CD14-positive monocyte (primary cell): ENCODE measurements at regions of chr17 and their contacts with region 1.

Region 1: DNA sequence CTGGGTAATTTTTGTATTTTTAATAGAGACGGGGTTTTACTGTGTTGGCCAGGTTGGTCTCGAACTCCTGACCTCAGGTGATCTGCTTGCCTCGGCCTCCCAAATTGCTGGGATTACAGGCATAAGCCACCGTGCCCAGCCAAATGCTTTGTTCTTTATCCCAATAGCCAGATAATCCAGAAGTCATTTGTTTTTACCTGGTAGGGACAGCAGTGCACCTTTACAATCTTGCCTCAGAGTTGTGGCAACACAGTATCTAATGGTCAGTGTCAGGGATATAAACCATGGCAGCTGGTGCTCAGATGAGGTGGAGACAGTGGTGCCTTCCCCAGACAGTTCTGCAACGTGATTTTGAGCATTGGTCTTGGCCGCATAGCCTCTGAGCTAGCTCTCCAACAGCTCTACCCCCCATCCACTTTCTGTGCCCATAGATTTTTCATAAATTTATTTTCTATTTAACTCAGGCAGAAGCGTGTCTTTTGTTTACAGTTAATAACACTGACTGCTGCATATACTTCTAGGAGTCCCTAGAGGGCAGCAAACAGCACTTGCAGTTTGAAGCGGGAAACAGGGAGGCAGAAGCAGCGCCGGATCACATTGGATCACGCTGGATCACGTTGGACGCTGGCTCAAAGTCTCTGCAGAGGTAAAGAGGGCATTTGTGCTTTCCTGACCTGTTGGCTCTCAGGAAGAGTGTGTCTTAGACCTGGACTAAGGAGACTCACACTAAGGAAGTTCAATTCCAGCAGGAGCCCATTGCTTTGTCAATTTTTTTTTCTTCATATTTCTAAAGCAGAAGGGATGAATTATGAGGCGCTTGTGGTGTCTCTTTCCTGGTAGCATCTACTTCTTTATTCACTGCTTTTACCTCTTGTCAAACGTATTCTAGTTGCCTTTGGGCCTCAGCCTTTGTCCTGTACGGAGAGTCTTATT is 5.1 kb upstream of the GGT6 start:
- DNase-seq: peak; percentile 50 to 74 (median 72)
- H3K4me3 ChIP-seq: no peak overlapping the region
- H3K4me3 Mint-ChIP-seq: peak overlapping the region; percentile 13 to 57
- H3K27ac ChIP-seq: no peak overlapping the region
- H3K27ac Mint-ChIP-seq: no peak overlapping the region
- H3K4me1 ChIP-seq: peaks cover 2 to 4% of the 10 kb centered on the region in 2 donors
- H3K4me1 Mint-ChIP-seq: peaks cover 17% of the 10 kb centered on the region
- H3K27me3 ChIP-seq: no peaks in the 10 kb centered on the region
- H3K27me3 Mint-ChIP-seq: peaks cover 0 to 5% (median 4%) of the 10 kb centered on the region in 3 donors
- CTCF ChIP-seq: peak; percentile 90

Region 2: DNA sequence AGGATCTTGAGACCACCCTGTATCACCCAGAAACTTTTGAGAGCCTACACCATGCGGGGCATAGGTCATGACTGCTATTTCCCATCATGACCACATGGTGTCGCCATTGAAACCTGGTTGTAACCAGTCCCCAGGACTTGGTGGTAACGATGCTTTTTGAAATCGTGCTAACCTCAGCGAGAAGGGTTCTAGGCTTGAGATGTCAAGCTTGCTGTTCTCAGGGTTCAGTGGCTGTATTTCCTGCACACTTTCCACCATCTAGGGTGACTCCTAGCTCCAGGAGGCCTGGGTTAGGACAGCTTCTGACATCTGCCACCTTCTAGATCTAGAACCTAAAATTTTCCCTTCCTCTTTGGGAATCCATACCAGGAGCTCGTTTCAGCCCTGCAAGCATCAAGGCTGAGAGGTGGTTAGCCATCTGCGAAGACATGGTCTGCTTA is 144.8 kb before region 1 on chr17:
- intact Hi-C with region 1: loop called in 1 of 2 experiments (anchors 10 kb)
- DNase-seq: peak; percentile 59 to 76 (median 71)
- H3K4me3 ChIP-seq: no peak overlapping the region
- H3K4me3 Mint-ChIP-seq: peak overlapping the region in 1 of 2 donors; percentile 46
- H3K27ac ChIP-seq: no peak overlapping the region
- H3K27ac Mint-ChIP-seq: no peak overlapping the region
- H3K4me1 ChIP-seq: peaks cover 0 to 11% of the 10 kb centered on the region in 2 donors
- H3K4me1 Mint-ChIP-seq: peaks cover 26% of the 10 kb centered on the region
- H3K27me3 ChIP-seq: no peaks in the 10 kb centered on the region
- H3K27me3 Mint-ChIP-seq: peaks cover 2 to 6% (median 5%) of the 10 kb centered on the region in 3 donors
- CTCF ChIP-seq: peak; percentile 93

Region 3: GRCh38 chr17:4625181-4625617 is 59.7 kb after region 1 on chr17:
- intact Hi-C with region 1: loop called (anchors 5 kb)
- DNase-seq: no peak
- H3K4me3 ChIP-seq: no peak overlapping the region
- H3K4me3 Mint-ChIP-seq: no peak overlapping the region
- H3K27ac ChIP-seq: no peak overlapping the region
- H3K27ac Mint-ChIP-seq: no peak overlapping the region
- H3K4me1 ChIP-seq: no peaks in the 10 kb centered on the region
- H3K4me1 Mint-ChIP-seq: peaks cover 12% of the 10 kb centered on the region
- H3K27me3 ChIP-seq: peaks cover 0 to 3% of the 10 kb centered on the region in 2 donors
- H3K27me3 Mint-ChIP-seq: peaks cover 0 to 18% (median 5%) of the 10 kb centered on the region in 3 donors
- CTCF ChIP-seq: no peak

Region 4: GRCh38 chr17:4631836-4632580 is 66.5 kb after region 1 on chr17:
- intact Hi-C with region 1: loop called (anchors 5 kb)
- DNase-seq: no peak
- H3K4me3 ChIP-seq: no peak overlapping the region
- H3K4me3 Mint-ChIP-seq: no peak overlapping the region
- H3K27ac ChIP-seq: no peak overlapping the region
- H3K27ac Mint-ChIP-seq: no peak overlapping the region
- H3K4me1 ChIP-seq: peaks cover 22% of the 10 kb centered on the region in 2 donors
- H3K4me1 Mint-ChIP-seq: peaks cover 26% of the 10 kb centered on the region
- H3K27me3 ChIP-seq: no peaks in the 10 kb centered on the region
- H3K27me3 Mint-ChIP-seq: peaks cover 1 to 16% (median 6%) of the 10 kb centered on the region in 3 donors
- CTCF ChIP-seq: no peak

Region 5: GRCh38 chr17:4852567-4853207 is 287.2 kb after region 1 on chr17:
- intact Hi-C with region 1: no loop called
- DNase-seq: no peak
- H3K4me3 ChIP-seq: no peak overlapping the region
- H3K4me3 Mint-ChIP-seq: no peak overlapping the region
- H3K27ac ChIP-seq: no peak overlapping the region
- H3K27ac Mint-ChIP-seq: peak overlapping the region in 2 of 7 donors; percentile 13 to 55
- H3K4me1 ChIP-seq: peaks cover 25 to 34% of the 10 kb centered on the region in 2 donors
- H3K4me1 Mint-ChIP-seq: peaks cover 50% of the 10 kb centered on the region
- H3K27me3 ChIP-seq: no peaks in the 10 kb centered on the region
- H3K27me3 Mint-ChIP-seq: peaks cover 2 to 6% (median 6%) of the 10 kb centered on the region in 3 donors
- CTCF ChIP-seq: no peak

Region 6: DNA sequence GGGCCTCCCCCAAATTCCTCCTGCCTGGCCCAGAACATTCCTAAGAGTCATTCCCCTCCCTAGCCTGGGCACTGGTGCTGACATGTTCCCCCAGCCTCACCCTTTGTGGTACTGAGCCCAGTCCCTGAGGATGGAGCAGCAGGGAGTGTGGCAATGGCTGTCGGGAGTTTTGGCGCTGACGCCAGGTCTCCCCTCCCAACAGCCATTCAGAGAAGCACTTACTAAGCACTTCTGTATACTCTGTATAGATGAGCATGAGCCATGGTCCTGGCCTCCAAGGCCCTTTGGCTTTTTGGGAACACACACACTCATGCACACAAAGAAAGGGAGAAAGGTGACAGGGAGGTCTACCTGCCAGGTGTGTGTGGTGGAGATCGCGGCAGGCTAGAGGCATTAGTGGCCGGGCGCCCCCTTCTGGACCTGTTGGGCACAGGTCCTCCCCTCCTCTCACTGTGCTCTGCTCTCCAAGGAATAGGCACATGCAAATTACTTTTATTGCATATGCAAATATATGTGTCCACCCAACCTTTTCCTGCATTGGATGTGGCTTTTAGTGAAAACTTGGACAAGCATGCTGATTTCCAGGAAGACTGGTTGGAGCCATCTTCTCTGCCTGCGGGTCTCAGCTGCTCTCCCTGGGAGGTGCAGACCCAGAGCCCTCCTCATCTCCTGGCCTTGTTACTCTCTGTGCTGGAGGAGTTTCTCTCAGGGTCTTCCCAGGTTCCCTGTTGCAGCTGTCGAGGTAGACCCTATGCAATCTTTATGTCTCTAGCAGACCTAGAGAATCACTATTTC is 316.5 kb after region 1 on chr17:
- intact Hi-C with region 1: loop called (anchors 5 kb)
- DNase-seq: peak in 2 of 3 donors; percentile 41 to 54
- H3K4me3 ChIP-seq: no peak overlapping the region
- H3K4me3 Mint-ChIP-seq: no peak overlapping the region
- H3K27ac ChIP-seq: no peak overlapping the region
- H3K27ac Mint-ChIP-seq: peak overlapping the region in 2 of 7 donors; percentile 1 to 46
- H3K4me1 ChIP-seq: peaks cover 26 to 38% of the 10 kb centered on the region in 2 donors
- H3K4me1 Mint-ChIP-seq: peaks cover 33% of the 10 kb centered on the region
- H3K27me3 ChIP-seq: no peaks in the 10 kb centered on the region
- H3K27me3 Mint-ChIP-seq: peaks cover 1 to 6% (median 5%) of the 10 kb centered on the region in 3 donors
- CTCF ChIP-seq: peak; percentile 92

Region 7: GRCh38 chr17:4891411-4892342 is 326.2 kb after region 1 on chr17:
- intact Hi-C with region 1: loop called in 1 of 2 experiments (anchors 5 kb)
- DNase-seq: peak in 1 of 3 donors; percentile 3
- H3K4me3 ChIP-seq: no peak overlapping the region
- H3K4me3 Mint-ChIP-seq: no peak overlapping the region
- H3K27ac ChIP-seq: no peak overlapping the region
- H3K27ac Mint-ChIP-seq: peak overlapping the region in 1 of 7 donors; percentile 66
- H3K4me1 ChIP-seq: no peaks in the 10 kb centered on the region
- H3K4me1 Mint-ChIP-seq: peaks cover 2% of the 10 kb centered on the region
- H3K27me3 ChIP-seq: no peaks in the 10 kb centered on the region
- H3K27me3 Mint-ChIP-seq: peaks cover 0 to 3% (median 0%) of the 10 kb centered on the region in 3 donors
- CTCF ChIP-seq: no peak